HepG2 (cell line): ENCODE measurements at regions of chr3 and their contacts with region 1.

Region 1: GRCh38 chr3:56988458-56989168 is 71.9 kb upstream of the SPATA12 start:
- DNase-seq: peak; percentile 73
- ATAC-seq: peak; percentile 61
- H3K4me3 ChIP-seq: peak overlapping the region in 2 of 3 experiments; percentile 24 to 68; a peak in 3 of 6 replicates
- H3K27ac ChIP-seq: no peak overlapping the region
- H3K4me1 ChIP-seq: peaks cover 64% of the 10 kb centered on the region
- H3K27me3 ChIP-seq: no peaks in the 10 kb centered on the region
- CTCF ChIP-seq: peak; percentile 86
- EP300 ChIP-seq: no peak
- POLR2A ChIP-seq: no peak
- RAD21 ChIP-seq: peak; percentile 82

Region 2: GRCh38 chr3:56702490-56703315 is 285.9 kb before region 1 on chr3:
- CTCF ChIA-PET with region 1: interaction called, 24 read pairs
- POLR2A ChIA-PET with region 1: interaction called, 10 read pairs
- in situ Hi-C with region 1: loop called (anchors 5 kb)
- intact Hi-C with region 1: loop called (anchors 1 kb)
- DNase-seq: peak; percentile 63
- ATAC-seq: peak; percentile 66
- H3K4me3 ChIP-seq: no peak overlapping the region
- H3K27ac ChIP-seq: no peak overlapping the region
- H3K4me1 ChIP-seq: 0 out of 2 replicates have a peak, but pooled peaks cover 4% of the 10 kb centered on the region
- H3K27me3 ChIP-seq: no peaks in the 10 kb centered on the region; a peak in 1 of 5 replicates
- CTCF ChIP-seq: peak; percentile 72
- EP300 ChIP-seq: no peak
- POLR2A ChIP-seq: no peak
- RAD21 ChIP-seq: peak; percentile 72

Region 3: DNA sequence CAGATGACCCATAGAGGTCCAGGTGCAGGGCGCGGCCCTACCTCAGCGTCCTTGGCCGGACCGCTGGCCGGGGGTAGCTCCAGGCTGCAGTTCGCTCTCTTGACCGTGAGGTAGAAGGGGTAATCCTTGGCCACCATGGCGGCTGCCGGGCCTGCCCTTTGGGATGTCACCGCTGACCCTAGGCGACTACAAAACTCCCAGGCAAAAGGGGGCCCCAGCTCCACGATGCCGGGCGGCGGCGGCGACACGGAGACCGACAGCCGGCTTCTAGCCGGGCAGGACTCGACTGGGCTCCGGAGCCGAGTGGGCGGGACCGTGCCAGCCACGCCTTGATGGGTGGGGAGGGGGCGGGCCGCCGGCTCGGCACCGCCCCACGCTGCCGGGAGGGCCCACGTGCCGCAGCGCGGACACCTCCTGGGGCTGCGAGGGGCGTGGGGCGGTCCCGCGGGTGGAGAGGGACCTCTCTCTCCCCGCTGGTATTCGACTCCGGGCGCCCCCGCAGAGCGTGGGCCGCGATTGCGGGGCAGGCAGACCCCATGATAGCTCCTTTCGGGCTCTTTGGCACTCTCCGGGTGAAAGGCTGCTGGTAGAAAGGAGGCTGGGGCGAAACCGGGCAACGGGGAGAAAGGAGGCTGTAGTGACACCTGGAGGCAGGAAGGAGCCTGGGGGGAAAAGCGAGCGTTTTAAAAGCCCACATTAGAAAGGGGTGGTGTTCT is 186.8 kb before region 1 on chr3 and contains the start of gene ARHGEF3:
- CTCF ChIA-PET with region 1: no interaction called
- POLR2A ChIA-PET with region 1: interaction called, 23 read pairs
- in situ Hi-C with region 1: loop called (anchors 5 kb)
- intact Hi-C with region 1: loop called (anchors 1 kb)
- DNase-seq: peak; percentile 76
- ATAC-seq: peak; percentile 92
- H3K4me3 ChIP-seq: peak within 1 kb of the TSS; percentile 71 to 96 (median 85)
- H3K27ac ChIP-seq: peak within 1 kb of the TSS; percentile 47
- H3K4me1 ChIP-seq: peaks cover 53% of the 10 kb centered on the region
- H3K27me3 ChIP-seq: no peaks in the 10 kb centered on the region; a peak in 1 of 5 replicates
- CTCF ChIP-seq: peak; percentile 77
- EP300 ChIP-seq: no peak
- POLR2A ChIP-seq: peak; percentile 36 to 73
- RAD21 ChIP-seq: peak; percentile 76
- total RNA-seq, gene ARHGEF3: 23.1 and 32.8 TPM in 2 replicates

Region 4: DNA sequence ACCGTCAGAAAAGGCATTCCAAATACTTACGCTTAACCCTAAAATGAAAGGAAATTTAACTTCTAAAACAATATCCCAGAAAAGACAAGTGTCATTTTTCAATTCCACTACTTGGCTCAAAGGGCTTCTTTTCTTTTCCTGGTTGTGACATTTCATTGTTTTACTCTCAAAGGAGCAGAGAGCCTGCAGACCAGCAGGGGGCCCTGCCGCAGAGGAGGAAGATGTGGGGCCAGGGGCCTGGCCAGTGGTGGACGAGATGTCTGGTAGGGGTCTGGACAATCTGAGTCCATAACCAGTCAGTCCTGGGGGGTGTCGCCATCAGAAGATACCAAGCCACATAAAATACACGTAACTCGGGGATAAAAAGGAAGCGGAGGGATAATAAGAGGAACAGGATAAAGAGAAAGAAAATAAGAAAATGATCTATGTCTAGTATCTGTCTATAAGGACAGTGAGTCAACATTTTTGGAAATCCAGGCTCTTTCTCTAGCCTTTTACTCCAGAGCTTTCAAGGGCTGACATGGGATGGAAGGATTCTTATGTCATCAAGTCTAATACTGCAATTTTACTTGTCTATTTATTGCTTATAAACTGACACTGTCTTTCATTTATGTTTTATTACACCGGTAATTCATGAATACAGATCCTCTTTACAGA is 132.6 kb before region 1 on chr3:
- CTCF ChIA-PET with region 1: interaction called, 9 read pairs
- POLR2A ChIA-PET with region 1: no interaction called
- in situ Hi-C with region 1: no loop called
- intact Hi-C with region 1: loop called (anchors 1 kb)
- DNase-seq: peak; percentile 37
- ATAC-seq: peak; percentile 84
- H3K4me3 ChIP-seq: no peak overlapping the region
- H3K27ac ChIP-seq: no peak overlapping the region
- H3K4me1 ChIP-seq: peaks cover 44% of the 10 kb centered on the region
- H3K27me3 ChIP-seq: no peaks in the 10 kb centered on the region
- CTCF ChIP-seq: peak; percentile 68
- EP300 ChIP-seq: no peak
- POLR2A ChIP-seq: no peak
- RAD21 ChIP-seq: peak; percentile 66